ENCODE measurements at regions of chr2 and their contacts with region 1.

Region 1: GRCh38 chr2:182980115-182980514 is 58.1 kb downstream of the NCKAP1 start:
- DNase-seq: no peak
- ATAC-seq: peak in 3 of 4 donors; percentile 68 to 83 (median 76)
- H3K4me3 ChIP-seq: no peak overlapping the region
- H3K27ac ChIP-seq: no peak overlapping the region
- H3K4me1 ChIP-seq: no peaks in the 10 kb centered on the region
- H3K27me3 ChIP-seq: no peaks in the 10 kb centered on the region
- CTCF ChIP-seq: peak; percentile 72

Region 2: DNA sequence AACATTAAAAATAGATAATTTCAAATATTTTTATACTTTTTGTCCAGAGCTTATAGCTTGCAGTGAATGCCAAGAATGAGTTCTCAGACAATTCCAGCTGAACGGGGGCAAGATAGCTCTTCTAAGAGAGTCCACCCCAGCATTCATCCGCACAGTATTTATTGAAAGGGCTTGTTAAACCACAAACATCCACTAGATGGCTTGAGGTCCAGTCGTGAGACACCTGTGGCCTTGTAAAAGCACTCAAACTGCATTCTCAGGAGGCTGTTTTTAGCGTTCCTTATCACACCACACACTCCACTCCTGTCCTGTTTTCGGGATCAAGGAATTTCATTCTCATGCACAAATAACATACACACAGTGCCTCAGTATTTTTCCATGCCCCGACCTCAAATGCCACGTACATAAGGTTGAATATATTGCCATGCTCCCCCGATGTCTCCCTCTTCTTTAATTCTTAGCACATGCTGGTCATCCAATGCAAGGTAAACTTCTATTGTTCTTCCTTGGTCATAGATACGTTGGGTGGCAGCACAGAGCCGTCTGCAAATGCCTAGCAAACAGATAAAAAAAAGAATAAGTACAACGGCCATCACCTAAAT is 216.7 kb before region 1 on chr2:
- intact Hi-C with region 1: loop called in 1 of 2 experiments (anchors 5 kb)
- DNase-seq: no peak
- ATAC-seq: peak; percentile 54 to 81 (median 71)
- H3K4me3 ChIP-seq: no peak overlapping the region
- H3K27ac ChIP-seq: no peak overlapping the region
- H3K4me1 ChIP-seq: no peaks in the 10 kb centered on the region
- H3K27me3 ChIP-seq: no peaks in the 10 kb centered on the region
- CTCF ChIP-seq: peak; percentile 54

Region 3: GRCh38 chr2:182784777-182785176 is 195.3 kb before region 1 on chr2:
- intact Hi-C with region 1: loop called (anchors 1 to 2 kb)
- DNase-seq: no peak
- ATAC-seq: peak; percentile 46 to 83 (median 66)
- H3K4me3 ChIP-seq: no peak overlapping the region
- H3K27ac ChIP-seq: no peak overlapping the region
- H3K4me1 ChIP-seq: no peaks in the 10 kb centered on the region
- H3K27me3 ChIP-seq: no peaks in the 10 kb centered on the region
- CTCF ChIP-seq: peak; percentile 63

Measured in psoas muscle (tissue), 8 donors.